B cell (primary cell): ENCODE measurements at regions of chr5 and their contacts with region 1.

Region 1: GRCh38 chr5:118987988-118988865 is at the start of gene DTWD2:
- DNase-seq: peak; percentile 97
- ATAC-seq: peak; percentile 87
- H3K4me3 ChIP-seq: peak within 1 kb of the TSS; percentile 63 to 86 (median 76)
- H3K4me3 Mint-ChIP-seq: peak within 1 kb of the TSS; percentile 91
- H3K27ac ChIP-seq: peak within 1 kb of the TSS; percentile 66 to 73
- H3K27ac Mint-ChIP-seq: peak within 1 kb of the TSS; percentile 90
- H3K4me1 ChIP-seq: peaks cover 17% of the 10 kb centered on the region in 2 donors
- H3K4me1 Mint-ChIP-seq: peaks cover 32% of the 10 kb centered on the region
- H3K27me3 ChIP-seq: no peaks in the 10 kb centered on the region
- H3K27me3 Mint-ChIP-seq: no peaks in the 10 kb centered on the region
- CTCF ChIP-seq: peak; percentile 99
- total RNA-seq, gene DTWD2: 6.0 and 6.3 TPM in 2 replicates

Region 2: DNA sequence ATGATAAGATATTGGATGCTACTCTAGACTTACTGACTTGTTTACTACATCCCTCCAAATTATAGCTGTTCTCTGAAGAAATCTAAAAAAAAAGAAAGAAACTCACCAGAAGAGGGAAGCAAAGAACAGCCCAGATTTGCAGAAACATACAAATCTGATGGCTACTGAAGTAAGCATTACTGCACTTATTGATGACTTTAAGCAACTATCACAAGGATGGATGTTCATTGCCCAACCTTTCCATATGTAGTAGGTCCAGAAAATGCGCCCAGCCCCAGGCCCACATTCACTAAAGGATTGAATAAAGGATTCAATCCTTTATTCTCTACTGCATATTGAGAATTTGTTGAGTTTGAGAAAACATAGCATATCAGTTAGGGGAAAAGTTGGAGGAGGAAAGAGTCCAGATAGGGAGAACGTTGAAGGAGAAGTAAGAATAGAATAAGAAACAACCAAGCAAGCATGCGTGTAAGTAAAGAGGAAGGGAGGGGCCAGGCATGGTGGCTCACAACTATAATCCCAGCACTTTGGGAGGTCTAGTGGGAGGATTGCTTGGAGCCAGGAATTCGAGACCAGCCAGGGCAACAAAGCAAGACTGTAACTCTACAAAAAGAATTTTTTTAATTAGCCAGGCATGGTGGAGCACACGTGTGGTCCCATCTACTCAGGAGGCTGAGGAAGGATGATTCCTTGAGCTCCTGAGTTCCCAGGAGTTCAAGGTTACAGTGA is 34.0 kb after region 1 on chr5:
- CTCF ChIA-PET with region 1: interaction called, 75 read pairs
- POLR2A ChIA-PET with region 1: no interaction called
- intact Hi-C with region 1: loop called (anchors 1 kb)
- DNase-seq: peak; percentile 68
- ATAC-seq: peak; percentile 62
- H3K4me3 ChIP-seq: peak overlapping the region in 1 of 5 experiments; percentile 7
- H3K4me3 Mint-ChIP-seq: peak overlapping the region; percentile 40
- H3K27ac ChIP-seq: peak overlapping the region; percentile 30 to 78
- H3K27ac Mint-ChIP-seq: peak overlapping the region; percentile 82
- H3K4me1 ChIP-seq: peaks cover 64 to 67% of the 10 kb centered on the region in 2 donors
- H3K4me1 Mint-ChIP-seq: peaks cover 65% of the 10 kb centered on the region
- H3K27me3 ChIP-seq: no peaks in the 10 kb centered on the region
- H3K27me3 Mint-ChIP-seq: no peaks in the 10 kb centered on the region
- CTCF ChIP-seq: peak; percentile 67

Region 3: DNA sequence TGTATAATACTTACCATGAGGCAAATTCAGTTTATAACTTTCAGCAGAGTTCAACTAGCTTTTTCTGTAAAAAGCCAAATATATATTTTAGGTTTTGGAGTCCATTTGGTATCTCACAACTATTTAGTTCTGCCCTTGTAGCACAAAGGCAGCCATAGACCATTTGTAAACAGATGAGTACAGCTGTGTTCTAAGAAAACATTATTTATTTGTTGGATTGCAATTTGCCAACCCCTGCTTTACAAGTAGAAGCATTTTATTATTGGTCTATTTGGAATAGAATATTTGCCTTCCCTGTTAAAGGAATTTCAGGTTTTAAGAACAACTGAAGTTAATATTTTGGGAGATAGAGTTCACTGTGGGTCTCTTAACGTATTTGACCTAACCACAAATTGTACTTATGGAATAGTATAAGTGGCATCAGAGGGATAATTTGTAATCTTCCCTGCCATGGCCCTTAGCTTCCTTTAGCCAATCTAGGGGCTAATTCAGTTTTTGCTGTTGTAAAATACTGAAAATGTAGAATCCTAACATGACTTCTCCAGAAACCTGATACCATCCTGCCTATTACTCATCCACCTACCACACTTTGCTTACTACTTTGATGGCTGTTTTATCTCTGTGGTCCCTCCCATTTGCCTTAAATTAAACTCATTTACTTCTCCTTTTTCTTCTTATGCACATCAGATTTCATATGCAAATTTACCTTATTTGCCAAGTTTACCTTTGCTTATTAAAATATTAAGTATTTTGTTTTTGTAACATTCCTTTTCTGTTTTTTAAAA is 191.8 kb after region 1 on chr5:
- CTCF ChIA-PET with region 1: interaction called, 5 read pairs
- POLR2A ChIA-PET with region 1: no interaction called
- intact Hi-C with region 1: loop called (anchors 5 kb)
- DNase-seq: no peak
- ATAC-seq: no peak
- H3K4me3 ChIP-seq: no peak overlapping the region
- H3K4me3 Mint-ChIP-seq: no peak overlapping the region
- H3K27ac ChIP-seq: no peak overlapping the region
- H3K27ac Mint-ChIP-seq: peak overlapping the region; percentile 22
- H3K4me1 ChIP-seq: peaks cover 3 to 18% of the 10 kb centered on the region in 2 donors
- H3K4me1 Mint-ChIP-seq: peaks cover 19% of the 10 kb centered on the region
- H3K27me3 ChIP-seq: no peaks in the 10 kb centered on the region
- H3K27me3 Mint-ChIP-seq: no peaks in the 10 kb centered on the region
- CTCF ChIP-seq: no peak

Region 4: DNA sequence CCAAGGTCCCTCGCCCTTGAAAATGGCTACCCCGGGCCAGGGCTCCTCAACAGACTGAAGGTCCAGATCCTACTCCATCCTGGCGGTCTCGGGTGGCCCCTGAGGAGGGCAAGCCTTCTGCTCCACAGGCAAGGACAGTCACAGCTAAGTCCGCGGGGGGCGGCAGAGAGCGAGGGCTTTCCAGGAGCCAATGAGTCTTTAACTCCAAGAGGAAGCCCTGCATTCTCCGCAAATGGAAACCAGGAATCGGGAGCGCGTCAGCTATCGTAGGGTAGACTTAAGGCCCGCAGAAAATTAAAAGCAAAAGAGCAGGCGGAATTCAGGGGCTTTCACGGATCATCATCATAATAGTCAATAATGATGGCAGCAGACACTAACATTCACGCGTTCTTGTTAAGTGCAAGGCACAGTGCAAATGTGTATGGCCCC is 279.7 kb after region 1 on chr5:
- CTCF ChIA-PET with region 1: interaction called, 8 read pairs
- POLR2A ChIA-PET with region 1: interaction called, 4 read pairs
- intact Hi-C with region 1: loop called (anchors 1 kb)
- DNase-seq: peak; percentile 94
- ATAC-seq: peak; percentile 63
- H3K4me3 ChIP-seq: peak overlapping the region; percentile 79 to 99 (median 96)
- H3K4me3 Mint-ChIP-seq: peak overlapping the region; percentile 98
- H3K27ac ChIP-seq: peak overlapping the region; percentile 83 to 91
- H3K27ac Mint-ChIP-seq: peak overlapping the region; percentile 95
- H3K4me1 ChIP-seq: peaks cover 39 to 40% of the 10 kb centered on the region in 2 donors
- H3K4me1 Mint-ChIP-seq: peaks cover 51% of the 10 kb centered on the region
- H3K27me3 ChIP-seq: no peaks in the 10 kb centered on the region
- H3K27me3 Mint-ChIP-seq: no peaks in the 10 kb centered on the region
- CTCF ChIP-seq: peak; percentile 38

Region 5: DNA sequence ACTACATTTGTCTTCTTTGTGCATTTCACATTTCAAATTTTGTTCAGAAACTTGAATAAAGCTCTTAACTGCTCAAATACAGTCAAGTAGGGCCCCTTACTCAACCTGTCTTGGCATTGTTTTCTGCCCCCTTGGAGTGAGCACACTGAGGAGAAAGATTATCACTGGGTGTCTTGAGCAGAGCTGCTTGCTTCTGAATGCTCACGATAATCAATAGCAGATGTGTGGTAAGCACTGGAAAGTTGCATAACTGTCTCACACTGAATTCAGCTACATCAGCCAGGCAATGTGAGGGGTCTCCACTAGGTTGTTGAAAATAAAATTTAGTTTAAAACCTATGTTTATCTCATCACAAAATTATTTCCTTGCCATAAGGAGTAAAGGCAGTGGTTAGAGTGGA is 359.8 kb after region 1 on chr5:
- CTCF ChIA-PET with region 1: interaction called, 10 read pairs
- POLR2A ChIA-PET with region 1: no interaction called
- intact Hi-C with region 1: loop called (anchors 5 kb)
- DNase-seq: no peak
- ATAC-seq: no peak
- H3K4me3 ChIP-seq: no peak overlapping the region
- H3K4me3 Mint-ChIP-seq: peak overlapping the region; percentile 18
- H3K27ac ChIP-seq: peak overlapping the region in 1 of 2 donors; percentile 54
- H3K27ac Mint-ChIP-seq: peak overlapping the region; percentile 80
- H3K4me1 ChIP-seq: peaks cover 92 to 95% of the 10 kb centered on the region in 2 donors
- H3K4me1 Mint-ChIP-seq: peaks cover 92% of the 10 kb centered on the region
- H3K27me3 ChIP-seq: no peaks in the 10 kb centered on the region
- H3K27me3 Mint-ChIP-seq: no peaks in the 10 kb centered on the region
- CTCF ChIP-seq: no peak

Region 6: GRCh38 chr5:119452373-119453039 is 464.3 kb after region 1 on chr5 and contains the start of gene HSD17B4:
- CTCF ChIA-PET with region 1: interaction called, 5 read pairs
- POLR2A ChIA-PET with region 1: no interaction called
- intact Hi-C with region 1: loop called (anchors 1 kb)
- DNase-seq: peak; percentile 92
- ATAC-seq: peak; percentile 93
- H3K4me3 ChIP-seq: peak within 1 kb of the TSS; percentile 69 to 89 (median 77)
- H3K4me3 Mint-ChIP-seq: peak within 1 kb of the TSS; percentile 96
- H3K27ac ChIP-seq: peak within 1 kb of the TSS; percentile 86 to 87
- H3K27ac Mint-ChIP-seq: peak within 1 kb of the TSS; percentile 97
- H3K4me1 ChIP-seq: peaks cover 32% of the 10 kb centered on the region in 2 donors
- H3K4me1 Mint-ChIP-seq: peaks cover 53% of the 10 kb centered on the region
- H3K27me3 ChIP-seq: no peaks in the 10 kb centered on the region
- H3K27me3 Mint-ChIP-seq: no peaks in the 10 kb centered on the region
- CTCF ChIP-seq: no peak
- total RNA-seq, gene HSD17B4: 112 and 114 TPM in 2 replicates